Ascending aorta (tissue), 2 donors: ENCODE measurements at regions of chr20 and their contacts with region 1.

Region 1: GRCh38 chr20:35699127-35699975 is at the starts of genes NFS1 and ROMO1:
- DNase-seq: peak; percentile 37 to 92
- H3K4me3 ChIP-seq: peak within 1 kb of the TSS; percentile 87 to 94
- H3K27ac ChIP-seq: peak within 1 kb of the TSS; percentile 96
- H3K4me1 ChIP-seq: peaks cover 3 to 21% of the 10 kb centered on the region in 2 donors
- H3K27me3 ChIP-seq: no peaks in the 10 kb centered on the region
- CTCF ChIP-seq: peak; percentile 4 to 35 (median 20)
- total RNA-seq, gene NFS1: 62.2 TPM
- total RNA-seq, gene ROMO1: 85.5 TPM

Region 2: DNA sequence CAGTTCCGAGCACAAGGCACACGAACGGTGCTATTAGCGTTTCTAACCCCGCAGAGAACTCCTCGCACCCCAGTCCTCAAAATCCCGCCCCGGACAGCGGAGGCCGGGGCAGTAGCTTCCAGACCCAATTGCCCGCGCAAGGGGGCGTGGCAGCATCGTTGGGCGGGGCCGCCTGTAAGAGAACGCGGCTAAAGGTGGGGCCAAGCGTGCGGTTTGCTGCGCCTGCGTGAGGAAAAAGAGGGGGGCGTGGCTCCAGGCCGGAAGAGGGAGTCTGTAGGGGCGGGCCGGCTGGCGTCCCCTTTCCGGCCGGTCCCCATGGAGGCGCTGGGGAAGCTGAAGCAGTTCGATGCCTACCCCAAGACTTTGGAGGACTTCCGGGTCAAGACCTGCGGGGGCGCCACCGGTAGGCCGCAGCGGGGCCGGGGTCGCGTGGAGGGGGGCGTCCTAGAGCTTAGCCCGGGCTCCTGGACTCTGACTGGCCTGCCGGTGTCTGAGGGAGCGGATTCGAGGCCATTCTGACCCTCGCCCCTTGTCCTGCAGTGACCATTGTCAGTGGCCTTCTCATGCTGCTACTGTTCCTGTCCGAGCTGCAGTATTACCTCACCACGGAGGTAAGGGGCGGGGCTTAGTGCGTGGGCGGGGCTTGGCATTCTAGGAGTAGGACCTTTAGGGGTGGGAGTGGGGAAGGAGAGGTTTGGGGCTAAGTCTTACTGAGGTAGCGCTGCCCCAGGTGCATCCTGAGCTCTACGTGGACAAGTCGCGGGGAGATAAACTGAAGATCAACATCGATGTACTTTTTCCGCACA is 157.4 kb before region 1 on chr20 and contains the start of gene ERGIC3:
- intact Hi-C with region 1: loop called (anchors 5 kb)
- DNase-seq: peak; percentile 86 to 98
- H3K4me3 ChIP-seq: peak within 1 kb of the TSS; percentile 75 to 85
- H3K27ac ChIP-seq: peak within 1 kb of the TSS; percentile 42 to 72
- H3K4me1 ChIP-seq: peaks cover 0 to 12% of the 10 kb centered on the region in 2 donors
- H3K27me3 ChIP-seq: no peaks in the 10 kb centered on the region
- CTCF ChIP-seq: peak in 1 of 3 experiments; percentile 7
- total RNA-seq, gene ERGIC3: 67.7 TPM

Region 3: DNA sequence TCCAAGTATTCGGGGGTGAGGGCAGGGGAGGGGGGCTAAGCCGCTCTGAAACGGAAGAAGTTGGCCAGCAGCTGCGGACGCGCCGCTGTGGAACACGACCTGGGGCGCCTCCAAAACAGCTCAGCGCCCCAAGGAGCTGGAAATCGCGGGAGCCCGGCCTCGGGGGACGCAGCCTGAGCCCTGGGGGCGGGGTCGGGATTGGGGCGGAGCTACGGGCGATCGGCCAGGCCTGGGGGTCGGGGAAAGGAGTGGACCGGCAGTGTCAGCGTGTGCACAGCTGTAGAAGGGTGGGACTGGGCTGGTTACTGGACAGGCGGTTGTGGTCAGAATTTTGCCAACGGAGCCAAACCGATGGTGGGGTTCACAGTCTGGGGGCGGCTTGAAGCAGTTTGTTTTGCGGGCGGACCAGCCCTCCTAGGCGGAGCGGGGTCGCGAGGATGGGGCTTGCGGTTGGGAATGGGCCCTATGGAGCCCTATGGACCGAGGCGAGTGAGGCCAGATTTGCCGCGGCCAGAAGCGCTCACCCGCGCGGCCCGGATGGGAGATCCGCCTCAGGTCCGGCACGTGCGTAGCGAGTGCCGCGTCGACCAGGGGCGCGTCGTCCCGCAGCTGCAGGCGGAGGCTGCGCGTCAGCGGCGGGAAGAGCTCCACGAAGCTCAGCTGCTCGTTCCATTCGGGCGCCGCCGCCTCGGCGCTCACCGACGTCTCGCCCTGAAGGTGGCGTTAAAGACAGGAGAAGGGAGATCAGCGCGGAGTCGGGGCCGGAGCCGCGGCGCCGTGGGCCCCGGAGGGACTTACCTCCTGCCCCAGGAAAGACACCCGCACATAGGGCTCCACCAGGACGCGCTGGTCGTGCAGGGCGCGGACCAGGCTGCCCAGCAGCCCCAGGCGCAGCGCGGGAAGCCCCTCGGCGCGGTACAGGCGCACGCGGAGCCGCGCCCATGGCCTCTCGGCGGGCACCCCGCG is 98.1 kb before region 1 on chr20:
- intact Hi-C with region 1: loop called (anchors 5 kb)
- DNase-seq: peak in 1 of 2 donors; percentile 84
- H3K4me3 ChIP-seq: peak overlapping the region; percentile 66 to 71
- H3K27ac ChIP-seq: no peak overlapping the region
- H3K4me1 ChIP-seq: peaks cover 10 to 14% of the 10 kb centered on the region in 2 donors
- H3K27me3 ChIP-seq: no peaks in the 10 kb centered on the region
- CTCF ChIP-seq: peak; percentile 28 to 69 (median 30)

Region 4: DNA sequence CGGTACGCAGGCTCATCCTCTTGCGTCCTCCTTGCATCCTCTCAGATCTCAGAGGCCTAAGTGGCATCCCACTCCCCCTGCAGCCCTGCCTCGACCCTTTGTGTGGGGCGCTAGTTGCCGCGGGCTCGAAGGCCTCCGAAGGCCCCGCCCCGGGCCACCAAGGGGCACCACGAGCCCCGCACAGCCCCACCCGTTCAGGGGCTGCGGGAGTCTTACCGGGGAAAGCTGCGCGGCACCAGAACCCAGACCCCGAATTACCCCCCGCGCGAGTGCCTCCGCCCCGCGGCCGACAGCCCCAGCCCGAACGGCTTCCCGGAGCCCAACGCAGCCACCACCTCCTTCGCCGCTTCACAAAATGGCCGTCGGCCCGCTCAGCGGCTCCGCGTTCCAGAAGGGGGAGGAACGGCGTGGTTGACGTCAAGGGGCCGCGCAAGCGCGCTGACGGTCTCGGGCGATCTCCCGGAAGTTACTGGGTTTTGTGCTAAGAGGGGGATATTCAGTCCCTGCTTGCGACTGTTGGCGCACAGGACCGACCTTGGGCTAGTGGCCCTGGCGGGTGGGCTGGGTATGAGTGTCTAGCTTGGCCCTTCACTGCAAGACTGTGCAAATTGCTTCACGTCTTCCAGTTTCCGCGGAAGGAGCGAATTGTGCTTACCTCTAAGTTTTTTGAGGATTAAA is 34.7 kb before region 1 on chr20 and contains the starts of genes CPNE1 and RBM12:
- intact Hi-C with region 1: loop called (anchors 2 kb)
- DNase-seq: peak; percentile 61 to 95
- H3K4me3 ChIP-seq: peak within 1 kb of the TSS; percentile 91 to 96
- H3K27ac ChIP-seq: peak within 1 kb of the TSS; percentile 97 to 98
- H3K4me1 ChIP-seq: peaks cover 2 to 23% of the 10 kb centered on the region in 2 donors
- H3K27me3 ChIP-seq: no peaks in the 10 kb centered on the region
- CTCF ChIP-seq: peak in 2 of 3 experiments; percentile 7 to 14
- total RNA-seq, gene CPNE1: 208 TPM
- total RNA-seq, gene RBM12: 8.9 TPM

Region 5: DNA sequence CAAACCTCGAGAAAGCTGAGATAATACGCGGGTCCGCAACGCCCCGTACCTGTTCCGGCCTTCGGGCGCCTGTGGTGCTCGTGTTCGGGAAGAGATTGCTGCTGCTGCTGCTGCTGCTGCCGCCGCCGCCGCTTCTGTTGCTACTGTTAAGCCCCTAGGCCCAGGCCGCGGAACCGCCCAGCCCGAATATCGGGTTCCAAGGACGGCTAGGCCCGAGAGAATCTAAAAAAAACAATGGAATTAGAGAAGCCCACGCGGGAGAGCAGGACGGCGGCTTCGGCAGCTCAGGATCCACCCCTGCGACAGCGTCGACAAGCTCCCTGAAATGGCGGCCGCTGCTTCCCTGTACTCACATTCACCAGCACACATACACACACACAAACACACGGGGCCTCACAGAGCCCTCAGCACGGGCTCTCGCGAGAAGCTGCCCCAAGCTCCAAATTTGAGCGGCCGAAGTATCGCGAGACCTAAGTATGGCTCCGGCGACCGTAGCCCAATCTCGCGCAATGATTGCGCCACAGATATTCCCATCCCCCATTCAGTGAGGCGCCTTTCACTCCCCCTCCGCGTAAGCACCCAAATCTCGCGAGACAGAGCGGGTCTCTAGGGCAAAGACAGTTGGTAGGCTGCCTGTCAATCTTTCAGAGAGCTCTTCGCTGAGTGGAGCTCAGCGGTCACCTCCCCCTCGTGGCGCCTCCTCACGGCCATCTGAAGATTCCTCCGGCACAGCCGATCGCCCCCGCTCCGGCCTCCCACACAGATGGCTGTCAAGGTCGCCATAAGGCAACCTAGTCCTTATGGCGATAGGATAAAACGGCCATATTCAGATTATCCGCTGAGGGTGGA is 42.8 kb after region 1 on chr20 and contains the start of gene RBM39:
- intact Hi-C with region 1: loop called (anchors 5 kb)
- DNase-seq: peak; percentile 98 to 100
- H3K4me3 ChIP-seq: peak within 1 kb of the TSS; percentile 84 to 86
- H3K27ac ChIP-seq: peak within 1 kb of the TSS; percentile 99 to 100
- H3K4me1 ChIP-seq: peaks cover 10 to 28% of the 10 kb centered on the region in 2 donors
- H3K27me3 ChIP-seq: no peaks in the 10 kb centered on the region
- CTCF ChIP-seq: peak; percentile 22 to 50 (median 42)
- total RNA-seq, gene RBM39: 232 TPM